CD4-positive, alpha-beta T cell (primary cell): ENCODE measurements at regions of chr12 and their contacts with region 1.

Region 1: GRCh38 chr12:57476162-57476992 is 3.3 kb downstream of the ARHGAP9 start:
- DNase-seq: peak; percentile 52 to 84 (median 64)
- ATAC-seq: peak; percentile 31
- H3K4me3 ChIP-seq: peak overlapping the region; percentile 90
- H3K4me3 Mint-ChIP-seq: peak overlapping the region; percentile 93
- H3K27ac ChIP-seq: peak overlapping the region; percentile 99
- H3K27ac Mint-ChIP-seq: peak overlapping the region; percentile 99
- H3K4me1 ChIP-seq: peaks cover 84% of the 10 kb centered on the region
- H3K4me1 Mint-ChIP-seq: peaks cover 89% of the 10 kb centered on the region
- H3K27me3 ChIP-seq: no peaks in the 10 kb centered on the region
- H3K27me3 Mint-ChIP-seq: no peaks in the 10 kb centered on the region
- CTCF ChIP-seq: peak; percentile 63

Region 2: GRCh38 chr12:56759263-56759908 is 717.0 kb before region 1 on chr12:
- CTCF ChIA-PET with region 1: no interaction called
- POLR2A ChIA-PET with region 1: no interaction called
- intact Hi-C with region 1: no loop called
- DNase-seq: no peak
- ATAC-seq: no peak
- H3K4me3 ChIP-seq: no peak overlapping the region
- H3K4me3 Mint-ChIP-seq: no peak overlapping the region
- H3K27ac ChIP-seq: no peak overlapping the region
- H3K27ac Mint-ChIP-seq: no peak overlapping the region
- H3K4me1 ChIP-seq: peaks cover 4% of the 10 kb centered on the region
- H3K4me1 Mint-ChIP-seq: no peaks in the 10 kb centered on the region
- H3K27me3 ChIP-seq: no peaks in the 10 kb centered on the region
- H3K27me3 Mint-ChIP-seq: no peaks in the 10 kb centered on the region
- CTCF ChIP-seq: no peak

Region 3: DNA sequence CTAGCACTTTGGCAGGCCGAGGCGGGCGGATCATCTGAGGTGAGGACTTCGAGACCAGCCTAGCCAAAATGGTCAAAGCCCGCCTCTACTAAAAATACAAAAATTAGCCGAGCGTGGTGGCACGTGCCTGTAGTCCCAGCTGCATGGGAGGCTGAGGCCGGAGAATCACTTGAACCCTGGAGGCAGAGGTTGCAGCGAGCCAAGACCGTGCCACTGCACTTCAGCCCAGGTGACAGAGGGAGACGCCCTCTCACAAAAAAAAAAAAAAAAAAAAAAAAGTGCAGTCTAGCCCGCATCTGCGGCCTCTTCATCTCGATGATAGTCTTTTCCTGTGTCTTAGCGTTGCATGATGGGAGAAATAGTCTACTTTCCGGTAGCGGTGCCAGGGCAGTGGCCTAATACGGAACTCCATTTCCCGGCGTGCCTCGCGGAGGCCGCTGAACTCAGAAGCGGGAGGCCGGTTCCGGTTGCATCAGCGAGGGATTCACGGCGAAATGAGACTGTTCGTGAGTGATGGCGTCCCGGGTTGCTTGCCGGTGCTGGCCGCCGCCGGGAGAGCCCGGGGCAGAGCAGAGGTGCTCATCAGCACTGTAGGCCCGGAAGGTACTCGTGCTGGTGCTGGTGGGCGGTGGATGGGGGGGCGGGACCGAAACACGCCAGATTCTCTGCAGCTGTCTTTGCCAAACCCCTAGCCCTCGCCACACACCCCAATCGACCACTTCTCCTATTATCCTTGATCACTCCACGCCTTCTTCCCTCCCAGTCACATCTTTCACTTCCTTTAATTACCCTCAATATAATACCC is 11.4 kb after region 1 on chr12 and contains the start of gene MARS1:
- CTCF ChIA-PET with region 1: interaction called, 12 read pairs
- POLR2A ChIA-PET with region 1: interaction called, 15 read pairs
- intact Hi-C with region 1: loop called in 1 of 2 experiments (anchors 2 kb)
- DNase-seq: peak; percentile 80 to 98 (median 88)
- ATAC-seq: peak; percentile 96
- H3K4me3 ChIP-seq: peak within 1 kb of the TSS; percentile 98
- H3K4me3 Mint-ChIP-seq: peak within 1 kb of the TSS; percentile 98
- H3K27ac ChIP-seq: peak within 1 kb of the TSS; percentile 80 to 86
- H3K27ac Mint-ChIP-seq: peak within 1 kb of the TSS; percentile 90
- H3K4me1 ChIP-seq: peaks cover 26% of the 10 kb centered on the region
- H3K4me1 Mint-ChIP-seq: peaks cover 40% of the 10 kb centered on the region
- H3K27me3 ChIP-seq: no peaks in the 10 kb centered on the region
- H3K27me3 Mint-ChIP-seq: no peaks in the 10 kb centered on the region
- CTCF ChIP-seq: no peak
- total RNA-seq, gene MARS1: 203 to 204 TPM